ENCODE measurements at regions of chr11 and their contacts with region 1.

Region 1: DNA sequence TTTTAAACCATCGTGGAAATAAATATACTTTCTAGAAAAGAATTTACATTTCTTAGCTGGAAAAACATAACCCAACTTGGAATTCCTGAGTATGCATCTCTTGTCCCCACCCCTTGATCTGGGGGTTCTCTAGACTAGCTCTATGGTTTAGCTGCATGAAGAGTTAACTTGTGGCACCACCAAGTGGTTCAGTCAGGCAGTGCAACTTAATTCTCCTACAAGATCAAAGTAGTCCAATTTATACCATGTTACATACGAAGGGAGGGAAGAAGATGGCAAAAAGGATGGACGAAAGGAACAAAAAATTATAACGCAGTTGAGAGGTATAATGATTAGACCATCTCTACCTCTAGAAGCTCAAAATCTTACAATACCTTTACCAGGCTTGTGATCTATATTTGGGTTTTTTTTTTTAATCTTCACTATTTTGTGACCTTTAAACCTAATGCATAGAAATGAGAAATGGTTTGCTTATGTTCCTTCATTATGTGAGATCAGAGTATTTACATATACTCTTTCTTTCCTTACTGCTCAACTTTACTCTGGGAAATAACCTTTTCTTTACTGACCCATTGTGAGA is 28.5 kb upstream of the ALKBH3 start:
- DNase-seq: peak; percentile 88
- ATAC-seq: peak; percentile 100
- H3K4me3 ChIP-seq: no peak overlapping the region
- H3K27ac ChIP-seq: no peak overlapping the region
- H3K4me1 ChIP-seq: no peaks in the 10 kb centered on the region
- H3K27me3 ChIP-seq: no peaks in the 10 kb centered on the region
- CTCF ChIP-seq: peak; percentile 92
- POLR2A ChIP-seq: no peak
- RAD21 ChIP-seq: peak; percentile 96

Region 2: DNA sequence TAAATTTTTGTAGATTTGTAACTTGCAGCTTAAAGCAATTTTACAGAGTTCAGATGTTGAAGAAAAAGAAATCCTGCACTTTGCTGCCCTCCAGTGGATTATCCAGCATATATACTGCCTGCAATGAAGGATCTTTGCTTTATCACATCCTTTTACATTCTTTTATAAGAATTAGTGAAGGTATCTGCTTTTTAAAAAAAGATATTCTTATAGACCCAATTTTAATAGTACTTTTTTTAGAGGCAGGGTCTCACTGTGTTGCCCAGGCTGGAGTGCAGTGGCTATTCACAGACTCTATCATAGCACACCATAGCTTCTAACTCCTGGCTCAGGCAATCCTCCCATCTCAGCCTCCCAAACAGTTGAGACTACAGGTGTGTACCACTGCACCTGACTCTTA is 432.7 kb before region 1 on chr11:
- CTCF ChIA-PET with region 1: no interaction called
- POLR2A ChIA-PET with region 1: no interaction called
- dilution Hi-C with region 1: no loop called
- in situ Hi-C with region 1: no loop called
- intact Hi-C with region 1: loop called (anchors 5 kb)
- DNase-seq: peak; percentile 53
- ATAC-seq: peak; percentile 83
- H3K4me3 ChIP-seq: no peak overlapping the region
- H3K27ac ChIP-seq: no peak overlapping the region
- H3K4me1 ChIP-seq: 0 out of 2 replicates have a peak, but pooled peaks cover 2% of the 10 kb centered on the region
- H3K27me3 ChIP-seq: no peaks in the 10 kb centered on the region
- CTCF ChIP-seq: peak; percentile 59
- POLR2A ChIP-seq: no peak
- RAD21 ChIP-seq: peak; percentile 66

Region 3: DNA sequence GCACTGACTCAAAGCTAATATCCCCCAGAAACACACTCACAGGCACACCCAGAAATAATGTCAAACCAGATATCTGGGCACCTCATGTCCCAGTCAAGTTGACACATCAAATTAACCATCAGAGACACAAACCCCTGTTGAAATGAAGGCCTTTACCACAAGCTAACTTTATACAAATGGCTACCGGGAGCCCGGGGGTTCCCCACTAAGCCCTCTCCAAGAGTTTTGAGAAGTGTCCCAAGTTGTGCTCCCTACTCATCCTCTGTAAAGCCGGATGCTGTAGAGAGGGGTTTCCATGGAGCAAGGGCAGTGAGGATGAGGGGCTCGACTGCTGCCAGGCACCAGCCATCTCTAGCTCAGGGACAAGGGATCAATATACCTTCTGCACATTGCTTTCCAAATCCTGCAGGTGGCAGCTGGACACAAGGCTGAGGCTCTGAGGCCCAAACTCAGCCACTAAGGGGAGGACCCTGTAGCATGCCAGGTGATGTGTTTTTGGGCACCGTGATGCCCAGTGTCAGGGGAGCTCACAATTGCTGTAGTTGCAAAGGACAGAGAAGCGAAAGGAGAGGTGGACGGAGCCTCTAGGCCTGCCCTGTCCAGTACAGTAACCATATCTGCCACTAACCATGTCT is 347.7 kb before region 1 on chr11:
- CTCF ChIA-PET with region 1: interaction called, 8 read pairs
- POLR2A ChIA-PET with region 1: no interaction called
- dilution Hi-C with region 1: no loop called
- in situ Hi-C with region 1: no loop called
- intact Hi-C with region 1: loop called (anchors 5 kb)
- DNase-seq: peak; percentile 13
- ATAC-seq: peak; percentile 44; the same call in 1 of the 2 replicates
- H3K4me3 ChIP-seq: no peak overlapping the region
- H3K27ac ChIP-seq: no peak overlapping the region
- H3K4me1 ChIP-seq: no peaks in the 10 kb centered on the region
- H3K27me3 ChIP-seq: peaks cover 3% of the 10 kb centered on the region
- CTCF ChIP-seq: peak; percentile 36
- POLR2A ChIP-seq: no peak
- RAD21 ChIP-seq: peak; percentile 54

Region 4: DNA sequence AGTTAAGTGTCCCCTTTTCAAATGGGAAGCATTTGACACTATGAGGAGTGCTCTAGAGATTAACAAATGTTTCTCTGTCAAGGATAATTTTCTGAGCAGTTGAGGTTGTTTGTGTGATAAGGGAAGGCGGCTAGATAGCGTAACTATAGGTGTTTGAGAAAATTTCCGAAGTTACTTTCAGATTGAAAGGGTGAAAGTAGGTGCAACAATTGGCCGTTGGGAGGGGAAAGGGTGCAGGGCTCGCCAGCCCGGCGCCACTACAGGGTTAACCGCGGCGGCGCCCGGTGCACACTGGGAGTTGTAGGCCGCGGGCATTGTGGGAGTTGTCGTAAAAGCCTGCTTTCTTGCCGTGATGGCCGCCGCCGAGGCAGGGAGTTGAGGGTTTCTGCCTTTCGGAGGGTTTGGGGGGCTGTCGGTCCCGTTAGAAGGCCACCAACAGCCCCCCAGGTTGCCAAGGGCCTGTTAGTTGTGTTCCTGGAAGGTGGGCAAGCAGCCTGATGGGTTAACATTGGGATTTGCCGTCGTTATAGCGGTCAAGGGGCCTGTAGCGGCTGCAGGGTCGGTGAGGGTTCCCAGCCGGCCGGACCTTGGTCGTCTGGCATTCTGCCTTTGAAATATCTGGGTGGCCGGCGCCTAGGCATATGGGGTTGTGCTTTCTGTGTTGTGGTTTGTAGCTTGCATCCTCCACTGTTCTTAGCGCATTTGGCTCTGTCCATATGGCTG is 208.1 kb before region 1 on chr11:
- CTCF ChIA-PET with region 1: no interaction called
- POLR2A ChIA-PET with region 1: interaction called, 3 read pairs
- dilution Hi-C with region 1: no loop called
- in situ Hi-C with region 1: no loop called
- intact Hi-C with region 1: loop called (anchors 2 kb)
- DNase-seq: peak; percentile 82
- ATAC-seq: peak; percentile 100
- H3K4me3 ChIP-seq: peak overlapping the region; percentile 89
- H3K27ac ChIP-seq: peak overlapping the region; percentile 92
- H3K4me1 ChIP-seq: peaks cover 4% of the 10 kb centered on the region; the same call in 1 of the 2 replicates
- H3K27me3 ChIP-seq: peaks cover 7% of the 10 kb centered on the region
- CTCF ChIP-seq: no peak
- POLR2A ChIP-seq: peak; percentile 39; the same call in 1 of the 2 replicates
- RAD21 ChIP-seq: no peak

Region 5: DNA sequence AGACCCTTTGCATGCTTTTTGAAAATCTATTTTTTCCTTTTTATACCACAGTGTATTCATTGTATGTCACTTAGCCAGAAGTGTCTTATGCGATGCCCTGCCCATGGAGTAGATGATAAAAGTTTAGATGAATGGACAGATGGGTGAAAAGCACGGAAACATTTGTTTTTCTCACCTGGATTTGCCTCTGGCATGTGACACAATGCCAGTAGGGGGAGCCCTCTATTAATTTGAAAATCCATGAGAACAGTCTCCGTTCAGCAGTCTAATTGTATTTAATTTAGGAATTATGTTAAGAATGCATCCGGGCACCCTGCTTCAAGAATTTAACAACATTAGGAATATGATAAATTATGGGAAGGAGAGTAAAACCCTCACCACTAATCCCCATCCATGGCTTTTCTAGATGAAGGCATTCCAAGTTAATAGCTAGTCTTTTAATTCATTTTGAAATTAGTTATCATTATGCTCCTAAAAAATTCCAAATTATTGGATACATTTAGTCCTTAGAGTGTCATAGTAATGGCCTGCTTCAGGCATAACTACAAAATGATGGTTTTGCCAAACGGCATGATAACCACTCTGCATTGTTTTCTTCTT is 26.8 kb before region 1 on chr11:
- CTCF ChIA-PET with region 1: interaction called, 26 read pairs
- POLR2A ChIA-PET with region 1: no interaction called
- dilution Hi-C with region 1: no loop called
- in situ Hi-C with region 1: no loop called
- intact Hi-C with region 1: loop called (anchors 1 kb)
- DNase-seq: peak; percentile 35
- ATAC-seq: peak; percentile 56
- H3K4me3 ChIP-seq: no peak overlapping the region
- H3K27ac ChIP-seq: no peak overlapping the region
- H3K4me1 ChIP-seq: no peaks in the 10 kb centered on the region
- H3K27me3 ChIP-seq: no peaks in the 10 kb centered on the region
- CTCF ChIP-seq: peak; percentile 76
- POLR2A ChIP-seq: no peak
- RAD21 ChIP-seq: peak; percentile 73

Region 6: GRCh38 chr11:43920598-43921419 is 68.7 kb after region 1 on chr11:
- CTCF ChIA-PET with region 1: no interaction called
- POLR2A ChIA-PET with region 1: no interaction called
- dilution Hi-C with region 1: no loop called
- in situ Hi-C with region 1: no loop called
- intact Hi-C with region 1: no loop called
- DNase-seq: peak; percentile 100
- ATAC-seq: peak; percentile 79
- H3K4me3 ChIP-seq: no peak overlapping the region
- H3K27ac ChIP-seq: peak overlapping the region; percentile 46; the same call in 1 of the 2 replicates
- H3K4me1 ChIP-seq: peaks cover 45% of the 10 kb centered on the region
- H3K27me3 ChIP-seq: no peaks in the 10 kb centered on the region
- CTCF ChIP-seq: no peak
- POLR2A ChIP-seq: no peak
- RAD21 ChIP-seq: no peak